Calu3 (cell line): ENCODE measurements at regions of chrX and their contacts with region 1.

Region 1: GRCh38 chrX:112760697-112761096 is 79.9 kb downstream of the AMOT start:
- DNase-seq: no peak
- H3K4me3 Mint-ChIP-seq: no peak overlapping the region
- H3K27ac Mint-ChIP-seq: no peak overlapping the region
- H3K4me1 Mint-ChIP-seq: peaks cover 14% of the 10 kb centered on the region
- H3K27me3 Mint-ChIP-seq: no peaks in the 10 kb centered on the region
- CTCF ChIP-seq: no peak

Region 2: DNA sequence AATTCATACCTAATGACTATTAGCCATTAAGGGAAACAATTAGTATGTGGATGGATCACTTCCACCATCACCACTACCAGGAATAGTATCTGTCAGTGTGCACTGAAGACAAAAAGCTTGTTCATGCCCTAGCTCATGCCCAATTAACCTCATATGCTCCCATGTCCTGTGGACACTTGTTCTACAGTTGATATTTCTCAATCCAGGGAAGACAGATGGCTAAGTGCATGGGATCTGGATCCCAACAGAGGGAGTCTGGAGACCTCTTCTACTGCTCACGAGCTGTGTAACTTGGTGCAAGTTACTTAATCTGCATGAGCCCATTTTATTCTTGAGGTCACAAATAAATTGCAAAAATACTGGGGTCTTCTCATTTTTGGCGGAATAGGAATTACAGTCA is 56.2 kb after region 1 on chrX:
- CTCF ChIA-PET with region 1: no interaction called
- intact Hi-C with region 1: no loop called
- DNase-seq: no peak
- H3K4me3 Mint-ChIP-seq: no peak overlapping the region
- H3K27ac Mint-ChIP-seq: no peak overlapping the region
- H3K4me1 Mint-ChIP-seq: peaks cover 11% of the 10 kb centered on the region
- H3K27me3 Mint-ChIP-seq: no peaks in the 10 kb centered on the region
- CTCF ChIP-seq: no peak

Region 3: DNA sequence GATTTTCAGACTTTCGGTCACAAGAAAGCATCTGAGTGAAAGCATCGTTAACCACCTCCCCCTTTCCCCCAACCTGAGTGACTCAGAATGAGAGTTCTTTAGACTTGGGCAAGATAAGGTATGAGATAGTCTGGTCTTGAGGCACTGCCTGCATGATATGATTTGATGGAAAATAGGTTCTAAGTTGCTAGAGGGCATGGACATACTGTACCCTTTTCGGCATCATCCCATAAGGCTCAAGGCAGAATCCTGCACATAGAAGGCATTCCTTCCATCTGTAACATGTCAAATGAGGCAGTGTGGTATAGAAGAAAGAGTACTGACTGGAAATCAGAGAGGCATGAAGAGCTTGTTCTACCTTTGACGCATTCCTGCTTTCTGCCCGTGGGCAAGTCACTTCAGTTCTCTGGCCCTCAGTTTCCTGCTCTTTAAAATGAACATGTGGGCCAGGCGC is 96.8 kb after region 1 on chrX:
- CTCF ChIA-PET with region 1: no interaction called
- intact Hi-C with region 1: loop called (anchors 5 kb)
- DNase-seq: no peak
- H3K4me3 Mint-ChIP-seq: no peak overlapping the region
- H3K27ac Mint-ChIP-seq: no peak overlapping the region
- H3K4me1 Mint-ChIP-seq: no peaks in the 10 kb centered on the region
- H3K27me3 Mint-ChIP-seq: no peaks in the 10 kb centered on the region
- CTCF ChIP-seq: no peak